ENCODE measurements at regions of chr4 and their contacts with region 1.

Region 1: GRCh38 chr4:163755013-163755412 is 260.5 kb downstream of the TMA16 start:
- DNase-seq: no peak

Region 2: DNA sequence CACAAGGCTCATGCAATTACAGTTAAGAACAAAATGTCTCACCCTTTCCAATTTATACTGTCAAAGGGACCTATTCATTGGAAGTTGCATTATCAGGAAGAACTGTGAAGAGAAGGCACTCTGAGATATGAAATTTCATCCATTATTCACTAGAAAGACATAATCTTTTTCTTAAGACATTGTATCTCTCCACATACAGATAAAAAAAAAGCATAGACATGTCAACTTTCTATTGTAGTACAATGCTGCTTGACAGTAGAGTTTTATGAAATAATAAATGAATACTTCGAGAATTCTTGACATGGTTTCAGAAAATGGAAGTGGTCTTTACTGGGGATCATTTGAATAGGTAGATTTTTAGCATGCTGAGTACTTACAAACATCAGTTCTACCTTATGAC is 284.5 kb after region 1 on chr4:
- intact Hi-C with region 1: no loop called
- DNase-seq: no peak

Region 3: GRCh38 chr4:164731827-164732474 is 976.9 kb after region 1 on chr4:
- intact Hi-C with region 1: loop called (anchors 10 kb)
- DNase-seq: peak; percentile 35 to 92 (median 66)

Measured in posterior cingulate gyrus (tissue), 11 donors.